ENCODE measurements at regions of chr14 and their contacts with region 1.

Region 1: GRCh38 chr14:89027097-89027740 is 202.8 kb downstream of the TTC8 start:
- DNase-seq: peak; percentile 16 to 67
- ATAC-seq: peak; percentile 82 to 91 (median 89)
- H3K4me3 ChIP-seq: peak overlapping the region in 9 of 10 donors; percentile 33 to 62 (median 57)
- H3K27ac ChIP-seq: peak overlapping the region in 1 of 10 donors; percentile 48
- H3K4me1 ChIP-seq: peaks cover 4 to 32% (median 12%) of the 10 kb centered on the region in 9 donors
- H3K27me3 ChIP-seq: peaks cover 0 to 72% (median 63%) of the 10 kb centered on the region in 7 donors
- CTCF ChIP-seq: peak; percentile 73 to 89 (median 85)

Region 2: DNA sequence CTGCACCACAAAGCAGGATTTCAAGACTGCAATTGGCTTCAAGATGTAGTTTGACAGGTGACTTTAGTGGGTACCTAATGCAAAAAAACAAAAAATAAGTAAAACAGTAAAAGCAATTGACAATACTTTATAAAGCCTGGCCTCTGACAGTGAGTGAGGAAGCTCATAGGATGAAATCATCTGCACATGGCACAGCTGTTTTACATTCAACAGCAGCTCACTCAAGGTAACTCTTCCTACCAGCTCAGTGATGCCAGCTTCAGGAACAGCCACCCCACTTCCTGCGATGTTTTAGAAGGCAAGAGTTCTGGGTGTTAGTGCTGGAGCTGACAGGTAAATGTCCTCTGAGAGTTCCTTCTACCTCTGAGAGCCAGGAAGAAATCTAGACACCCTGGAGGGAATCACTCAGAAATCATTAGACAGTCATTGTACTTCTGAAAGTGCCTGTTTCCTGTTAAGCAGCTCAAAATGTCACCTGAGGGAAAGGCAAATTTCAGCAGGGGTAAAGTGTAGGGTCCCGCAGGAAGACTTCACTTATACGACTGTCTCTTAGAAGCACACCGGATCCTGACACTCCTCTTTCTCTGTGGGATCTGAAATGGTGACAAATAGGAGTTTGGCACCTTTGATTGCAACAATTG is 290.0 kb after region 1 on chr14:
- intact Hi-C with region 1: no loop called
- DNase-seq: no peak
- ATAC-seq: no peak
- H3K4me3 ChIP-seq: no peak overlapping the region
- H3K27ac ChIP-seq: no peak overlapping the region
- H3K4me1 ChIP-seq: peaks cover 0 to 37% (median 11%) of the 10 kb centered on the region in 9 donors
- H3K27me3 ChIP-seq: no peaks in the 10 kb centered on the region
- CTCF ChIP-seq: no peak

Region 3: GRCh38 chr14:89773644-89774316 is 746.6 kb after region 1 on chr14:
- intact Hi-C with region 1: loop called in 4 of 10 experiments (anchors 10 kb)
- DNase-seq: peak in 1 of 2 donors; percentile 43
- ATAC-seq: peak in 4 of 8 donors; percentile 44 to 87 (median 65)
- H3K4me3 ChIP-seq: no peak overlapping the region
- H3K27ac ChIP-seq: no peak overlapping the region
- H3K4me1 ChIP-seq: peaks cover 0 to 27% (median 7%) of the 10 kb centered on the region in 9 donors
- H3K27me3 ChIP-seq: no peaks in the 10 kb centered on the region
- CTCF ChIP-seq: no peak

Region 4: GRCh38 chr14:89899917-89900663 is 872.9 kb after region 1 on chr14:
- intact Hi-C with region 1: loop called in 2 of 10 experiments (anchors 5 kb)
- DNase-seq: no peak
- ATAC-seq: peak in 1 of 8 donors; percentile 53
- H3K4me3 ChIP-seq: no peak overlapping the region
- H3K27ac ChIP-seq: no peak overlapping the region
- H3K4me1 ChIP-seq: peaks cover 0 to 12% (median 0%) of the 10 kb centered on the region in 9 donors
- H3K27me3 ChIP-seq: no peaks in the 10 kb centered on the region
- CTCF ChIP-seq: peak in 8 of 9 donors; percentile 29 to 69 (median 60)

Region 5: DNA sequence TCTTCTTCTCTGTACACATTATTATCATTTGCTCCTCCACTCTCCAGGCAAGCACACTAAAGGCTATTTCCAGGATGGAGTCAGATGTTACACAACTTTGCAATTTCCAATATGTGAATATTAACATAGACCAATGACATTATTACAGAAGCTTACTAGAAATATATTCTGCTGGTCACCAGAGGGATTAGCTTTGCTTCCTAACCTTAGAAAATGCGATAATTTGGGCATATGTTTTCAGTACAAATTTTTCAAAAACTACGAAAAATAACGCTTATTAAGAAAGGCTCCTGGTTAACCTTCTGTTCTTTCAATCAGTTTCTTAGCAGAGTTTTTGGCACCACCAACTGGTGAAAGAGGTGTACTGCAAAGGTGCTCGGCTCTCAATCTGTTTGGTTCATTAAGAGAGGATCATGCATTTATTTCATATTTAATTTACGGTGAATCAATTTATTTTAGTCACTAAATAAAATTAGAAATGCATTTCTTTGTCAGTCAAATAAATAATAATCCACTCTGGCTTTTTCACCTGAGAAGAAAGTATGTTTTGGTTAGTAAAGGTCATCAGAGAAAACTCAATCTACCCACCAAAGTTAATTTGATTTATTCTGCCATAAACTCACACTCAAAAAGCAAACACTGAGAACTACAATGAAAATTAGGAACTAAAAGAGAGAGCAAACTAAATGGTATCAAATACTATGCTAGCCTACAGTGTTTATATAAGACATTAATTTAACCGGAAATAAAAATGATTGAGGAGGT is 888.1 kb after region 1 on chr14:
- intact Hi-C with region 1: loop called in 8 of 10 experiments (anchors 1 to 5 kb)
- DNase-seq: peak in 1 of 2 donors; percentile 41
- ATAC-seq: peak in 3 of 8 donors; percentile 36 to 65 (median 63)
- H3K4me3 ChIP-seq: no peak overlapping the region
- H3K27ac ChIP-seq: no peak overlapping the region
- H3K4me1 ChIP-seq: peaks cover 0 to 14% (median 0%) of the 10 kb centered on the region in 9 donors
- H3K27me3 ChIP-seq: no peaks in the 10 kb centered on the region
- CTCF ChIP-seq: peak; percentile 89 to 98 (median 96)

Measured in heart right ventricle (tissue), 16 donors.